Ascending aorta (tissue), 2 donors: ENCODE measurements at regions of chr15 and their contacts with region 1.

Region 1: DNA sequence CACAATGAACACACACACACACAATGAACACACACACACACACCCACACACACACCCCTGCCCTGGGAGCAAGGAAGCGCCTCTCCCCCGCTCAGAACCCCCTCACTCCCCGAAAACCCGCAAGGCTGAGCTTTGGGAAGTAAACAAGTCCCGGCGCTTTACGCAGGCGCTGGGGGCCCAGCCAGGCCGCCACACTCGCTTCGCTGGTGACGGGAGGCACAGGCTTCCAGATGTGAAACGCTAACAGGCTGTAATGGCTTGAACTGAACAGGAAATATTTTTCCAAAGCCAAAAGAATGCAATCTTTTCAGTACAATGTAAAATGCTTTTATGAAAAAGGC is 122.7 kb upstream of the IGF1R start:
- DNase-seq: no peak
- H3K4me3 ChIP-seq: peak overlapping the region; percentile 14 to 31
- H3K27ac ChIP-seq: peak overlapping the region; percentile 81 to 85
- H3K4me1 ChIP-seq: peaks cover 10 to 18% of the 10 kb centered on the region in 2 donors
- H3K27me3 ChIP-seq: no peaks in the 10 kb centered on the region
- CTCF ChIP-seq: no peak

Region 2: DNA sequence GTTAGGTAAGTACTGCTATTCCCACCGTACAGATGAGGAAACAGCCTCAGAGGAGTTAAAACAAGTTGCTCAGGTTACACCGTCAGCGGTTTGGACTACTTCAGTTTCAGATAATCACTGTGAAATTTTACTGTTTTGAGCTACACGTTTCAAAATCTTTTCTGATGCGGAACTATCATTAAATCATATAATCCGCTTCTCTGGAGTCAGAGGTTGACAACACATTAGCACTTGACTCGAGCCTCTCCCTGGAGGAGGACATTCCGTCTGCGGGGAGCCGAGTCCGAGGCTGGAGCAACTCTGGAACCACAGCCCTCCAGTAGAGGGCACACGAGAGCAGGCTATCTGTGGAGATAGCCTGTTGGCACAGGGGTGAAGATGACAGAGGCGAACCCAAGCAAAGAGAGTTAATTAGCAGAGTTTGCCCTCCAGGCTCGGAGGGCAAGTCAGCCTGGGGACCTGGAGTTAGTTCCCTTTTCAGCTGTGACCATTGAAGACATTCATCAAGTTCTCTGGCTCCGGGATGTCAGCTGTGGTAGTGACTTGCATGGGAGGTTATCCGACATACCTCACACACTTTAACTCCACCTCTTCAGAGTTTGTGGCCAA is 253.9 kb after region 1 on chr15:
- intact Hi-C with region 1: loop called (anchors 10 kb)
- DNase-seq: peak in 1 of 2 donors; percentile 81
- H3K4me3 ChIP-seq: no peak overlapping the region
- H3K27ac ChIP-seq: peak overlapping the region; percentile 9 to 42
- H3K4me1 ChIP-seq: peaks cover 6 to 36% of the 10 kb centered on the region in 2 donors
- H3K27me3 ChIP-seq: no peaks in the 10 kb centered on the region
- CTCF ChIP-seq: peak; percentile 77 to 89 (median 87)